ENCODE measurements at regions of chr5 and their contacts with region 1.

Region 1: GRCh38 chr5:67516948-67517565 is 320.5 kb upstream of the CD180 start:
- DNase-seq: no peak
- H3K4me3 Mint-ChIP-seq: no peak overlapping the region
- H3K27ac Mint-ChIP-seq: no peak overlapping the region
- H3K4me1 Mint-ChIP-seq: peaks cover 47% of the 10 kb centered on the region
- H3K27me3 Mint-ChIP-seq: no peaks in the 10 kb centered on the region

Region 2: DNA sequence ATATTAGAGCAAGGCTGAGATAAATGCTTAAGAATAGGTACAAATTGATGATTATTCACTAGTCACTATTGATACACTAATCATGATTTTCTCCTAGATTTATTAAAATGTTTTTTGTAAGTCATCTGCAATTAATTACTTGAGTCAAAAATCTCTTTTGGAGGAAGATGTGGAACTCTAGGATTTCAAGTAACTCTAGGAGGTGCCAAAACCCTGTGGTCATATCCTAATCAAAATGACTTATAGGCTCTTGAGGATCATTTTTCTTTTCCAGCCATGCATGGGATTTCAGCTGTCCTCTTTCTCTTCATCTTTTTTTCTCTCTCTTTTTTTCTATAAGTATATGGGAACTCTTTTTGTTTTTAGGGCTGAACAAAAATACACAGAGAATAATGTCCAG is 178.6 kb before region 1 on chr5:
- CTCF ChIA-PET with region 1: no interaction called
- intact Hi-C with region 1: no loop called
- DNase-seq: no peak
- H3K4me3 Mint-ChIP-seq: no peak overlapping the region
- H3K27ac Mint-ChIP-seq: no peak overlapping the region
- H3K4me1 Mint-ChIP-seq: no peaks in the 10 kb centered on the region
- H3K27me3 Mint-ChIP-seq: peaks cover 4% of the 10 kb centered on the region

Region 3: GRCh38 chr5:67537439-67538148 is 20.5 kb after region 1 on chr5:
- CTCF ChIA-PET with region 1: no interaction called
- intact Hi-C with region 1: loop called (anchors 2 kb)
- DNase-seq: no peak
- H3K4me3 Mint-ChIP-seq: no peak overlapping the region
- H3K27ac Mint-ChIP-seq: no peak overlapping the region
- H3K4me1 Mint-ChIP-seq: peaks cover 5% of the 10 kb centered on the region
- H3K27me3 Mint-ChIP-seq: no peaks in the 10 kb centered on the region

Region 4: DNA sequence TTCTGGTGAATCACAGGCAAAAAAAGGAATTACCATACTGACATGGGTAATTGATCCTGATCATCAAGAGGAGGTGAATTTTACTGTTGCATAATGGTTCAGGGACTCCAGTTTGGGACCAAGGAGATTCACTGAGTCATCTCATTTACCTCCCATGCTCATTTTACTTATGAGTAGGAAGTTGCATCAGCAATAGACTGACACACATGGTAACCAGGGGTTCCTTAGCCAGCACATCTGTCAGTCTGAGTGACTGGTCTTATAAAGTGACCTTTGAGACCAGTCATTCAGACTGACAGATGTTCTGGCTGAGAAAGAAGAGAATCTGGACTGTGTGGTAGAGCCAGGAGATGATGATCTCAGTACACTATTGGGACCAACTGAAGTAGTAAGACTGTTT is 64.1 kb after region 1 on chr5:
- CTCF ChIA-PET with region 1: no interaction called
- intact Hi-C with region 1: loop called (anchors 2 kb)
- DNase-seq: peak; percentile 8
- H3K4me3 Mint-ChIP-seq: no peak overlapping the region
- H3K27ac Mint-ChIP-seq: no peak overlapping the region
- H3K4me1 Mint-ChIP-seq: peaks cover 3% of the 10 kb centered on the region
- H3K27me3 Mint-ChIP-seq: no peaks in the 10 kb centered on the region